Activated CD4-positive, alpha-beta T cell treated with anti-CD3 and anti-CD28 coated beads for 36 hours (primary cell): ENCODE measurements at regions of chr16 and their contacts with region 1.

Region 1: DNA sequence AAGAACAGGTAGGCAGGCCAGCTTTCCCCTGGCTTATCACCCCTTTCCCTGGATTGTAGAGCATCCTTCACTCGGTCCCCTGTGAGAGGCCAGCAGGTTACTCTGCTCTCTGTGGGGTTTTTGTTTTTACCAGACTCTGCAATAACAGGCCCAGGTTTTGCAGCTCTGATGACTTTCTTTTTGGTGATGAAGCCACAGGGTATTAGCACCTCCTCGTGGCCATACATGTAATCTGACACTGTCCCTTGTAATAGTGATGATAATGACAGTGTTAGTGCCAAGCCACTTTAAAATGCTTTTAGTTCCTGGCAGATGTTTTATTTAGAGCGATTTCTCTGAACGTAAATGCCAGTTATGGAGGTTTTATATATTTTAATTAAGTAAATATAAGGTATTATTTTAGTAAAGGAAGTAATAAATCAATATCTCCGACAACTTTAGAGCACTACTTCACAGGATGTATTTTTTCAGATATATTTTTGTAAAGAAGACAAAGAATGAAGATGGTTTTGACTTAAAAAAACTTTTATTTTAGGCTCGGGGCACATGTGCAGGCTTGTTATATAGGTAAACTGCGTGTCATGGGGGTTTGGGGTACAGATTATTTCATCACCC is 38.0 kb upstream of the CPHXL start:
- DNase-seq: peak; percentile 70
- ATAC-seq: peak; percentile 93
- H3K4me3 Mint-ChIP-seq: no peak overlapping the region
- H3K27ac Mint-ChIP-seq: no peak overlapping the region
- H3K4me1 Mint-ChIP-seq: peaks cover 11% of the 10 kb centered on the region
- H3K27me3 Mint-ChIP-seq: peaks cover 2% of the 10 kb centered on the region

Region 2: DNA sequence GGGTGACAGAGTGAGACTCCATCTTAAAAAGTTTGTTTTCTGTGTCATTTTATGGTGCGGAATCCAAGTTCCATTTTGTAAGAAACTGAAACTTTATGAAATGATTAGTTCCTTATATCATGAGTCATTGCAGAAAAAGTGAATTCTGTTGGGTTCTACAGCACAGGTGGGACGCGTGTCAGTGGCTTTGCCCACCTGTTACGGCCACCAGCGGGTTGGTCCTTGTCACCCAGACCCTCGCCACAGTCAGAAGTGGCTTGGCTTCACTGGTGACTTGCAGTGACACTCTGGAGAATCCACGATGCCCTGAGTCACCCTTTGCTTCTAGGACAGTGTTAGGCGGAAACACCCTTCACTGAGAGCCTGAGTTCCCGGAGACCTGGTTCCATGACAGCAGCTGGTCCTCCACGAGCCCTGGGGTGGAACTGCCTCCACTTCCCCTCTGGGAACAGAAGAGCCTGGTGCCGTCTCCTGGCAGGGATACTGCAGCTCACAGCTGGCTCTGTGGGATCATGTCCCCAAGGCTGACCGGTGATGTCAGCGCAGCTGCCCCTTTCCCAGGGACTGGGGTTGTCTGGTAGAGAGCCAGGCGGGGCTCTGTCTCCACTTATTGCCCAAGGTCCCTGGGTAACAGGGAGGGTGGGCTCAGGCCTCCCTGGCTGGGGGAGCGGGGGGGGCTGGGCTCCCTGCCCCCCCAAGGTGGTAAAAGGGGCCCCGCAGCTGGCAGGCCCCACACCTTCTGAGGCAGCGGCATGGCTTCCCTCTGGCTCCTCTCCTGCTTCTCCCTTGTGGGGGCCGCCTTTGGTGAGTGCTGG is 545.8 kb before region 1 on chr16 and contains the start of gene CTRB1:
- CTCF ChIA-PET with region 1: no interaction called
- POLR2A ChIA-PET with region 1: no interaction called
- intact Hi-C with region 1: loop called in 1 of 2 experiments (anchors 5 kb)
- DNase-seq: peak; percentile 46
- ATAC-seq: peak; percentile 45
- H3K4me3 Mint-ChIP-seq: peak within 1 kb of the TSS; percentile 67
- H3K27ac Mint-ChIP-seq: peak within 1 kb of the TSS; percentile 83
- H3K4me1 Mint-ChIP-seq: peaks cover 21% of the 10 kb centered on the region
- H3K27me3 Mint-ChIP-seq: no peaks in the 10 kb centered on the region
- total RNA-seq, gene CTRB1: not detected

Region 3: GRCh38 chr16:75471723-75472633 is 292.3 kb before region 1 on chr16:
- CTCF ChIA-PET with region 1: interaction called, 21 read pairs
- POLR2A ChIA-PET with region 1: no interaction called
- intact Hi-C with region 1: loop called (anchors 1 kb)
- DNase-seq: peak; percentile 58
- ATAC-seq: peak; percentile 94
- H3K4me3 Mint-ChIP-seq: no peak overlapping the region
- H3K27ac Mint-ChIP-seq: no peak overlapping the region
- H3K4me1 Mint-ChIP-seq: no peaks in the 10 kb centered on the region
- H3K27me3 Mint-ChIP-seq: peaks cover under 1% of the 10 kb centered on the region

Region 4: DNA sequence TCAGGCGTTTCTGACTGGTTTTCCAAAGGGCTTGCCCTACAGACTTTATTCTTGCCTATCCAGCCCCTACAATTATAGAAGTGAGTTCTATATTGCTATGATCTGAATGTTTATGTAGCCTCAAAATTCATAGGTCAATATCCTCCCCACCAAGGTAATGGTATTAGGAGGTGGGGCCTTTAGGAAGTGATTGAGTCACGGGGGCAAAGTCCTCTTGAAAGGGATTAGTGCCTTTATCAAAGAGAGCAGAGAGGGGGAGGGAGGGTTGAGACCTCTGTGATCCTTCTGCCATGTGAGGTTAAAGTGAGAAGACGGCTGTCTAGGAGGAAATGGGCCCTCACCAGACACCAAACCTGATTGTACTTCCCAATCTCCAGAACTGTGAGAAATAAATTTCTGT is 37.0 kb before region 1 on chr16:
- CTCF ChIA-PET with region 1: no interaction called
- POLR2A ChIA-PET with region 1: no interaction called
- intact Hi-C with region 1: no loop called
- DNase-seq: no peak
- ATAC-seq: no peak
- H3K4me3 Mint-ChIP-seq: no peak overlapping the region
- H3K27ac Mint-ChIP-seq: no peak overlapping the region
- H3K4me1 Mint-ChIP-seq: no peaks in the 10 kb centered on the region
- H3K27me3 Mint-ChIP-seq: no peaks in the 10 kb centered on the region